ENCODE measurements at regions of chr11 and their contacts with region 1.

Region 1: DNA sequence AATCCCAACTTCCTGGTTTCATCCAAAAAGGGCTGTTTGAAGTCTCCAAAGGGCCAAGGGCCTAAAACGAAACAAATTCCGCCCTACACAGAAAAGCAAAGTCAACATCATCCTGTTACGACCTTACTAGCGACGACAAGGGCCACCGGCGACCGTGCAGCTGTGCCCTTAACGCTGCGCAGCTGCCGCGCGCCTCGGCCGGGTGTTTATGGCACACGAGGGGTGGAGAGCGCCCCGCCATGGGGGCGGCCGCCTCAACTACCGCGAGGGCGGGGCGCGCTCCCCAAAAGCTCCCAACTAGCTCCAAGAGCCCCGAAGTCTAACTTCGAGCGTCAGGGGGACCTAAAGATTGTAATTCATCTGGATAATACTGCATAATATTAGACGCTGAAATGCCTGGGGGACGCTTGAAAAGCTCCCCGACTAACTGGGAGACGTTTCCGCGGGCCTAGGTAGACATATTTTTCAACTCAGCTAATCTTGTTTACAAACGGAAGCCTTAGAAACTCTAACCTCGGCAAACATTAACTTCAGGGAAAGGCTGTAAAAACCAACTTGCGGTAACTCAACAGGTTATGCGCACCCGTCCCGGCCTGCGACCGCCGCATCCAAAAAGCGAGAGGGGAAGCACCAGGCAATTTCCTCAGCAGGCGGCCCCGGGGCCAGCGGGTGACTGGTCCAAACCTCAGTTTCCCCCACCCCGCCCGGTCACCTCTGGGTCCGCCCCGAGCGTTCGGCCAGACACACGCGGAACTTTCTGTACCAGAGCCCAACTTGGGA is 694 bp downstream of the TMEM123 start:
- DNase-seq: peak; percentile 78 to 82 (median 82)
- H3K4me3 ChIP-seq: peak overlapping the region; percentile 83 to 94
- H3K4me3 Mint-ChIP-seq: peak overlapping the region; percentile 89 to 99 (median 98)
- H3K27ac ChIP-seq: peak overlapping the region; percentile 86
- H3K27ac Mint-ChIP-seq: peak overlapping the region; percentile 94 to 98 (median 97)
- H3K4me1 ChIP-seq: peaks cover 70% of the 10 kb centered on the region
- H3K4me1 Mint-ChIP-seq: peaks cover 63 to 93% (median 76%) of the 10 kb centered on the region in 4 donors
- H3K27me3 ChIP-seq: no peaks in the 10 kb centered on the region
- H3K27me3 Mint-ChIP-seq: no peaks in the 10 kb centered on the region

Region 2: DNA sequence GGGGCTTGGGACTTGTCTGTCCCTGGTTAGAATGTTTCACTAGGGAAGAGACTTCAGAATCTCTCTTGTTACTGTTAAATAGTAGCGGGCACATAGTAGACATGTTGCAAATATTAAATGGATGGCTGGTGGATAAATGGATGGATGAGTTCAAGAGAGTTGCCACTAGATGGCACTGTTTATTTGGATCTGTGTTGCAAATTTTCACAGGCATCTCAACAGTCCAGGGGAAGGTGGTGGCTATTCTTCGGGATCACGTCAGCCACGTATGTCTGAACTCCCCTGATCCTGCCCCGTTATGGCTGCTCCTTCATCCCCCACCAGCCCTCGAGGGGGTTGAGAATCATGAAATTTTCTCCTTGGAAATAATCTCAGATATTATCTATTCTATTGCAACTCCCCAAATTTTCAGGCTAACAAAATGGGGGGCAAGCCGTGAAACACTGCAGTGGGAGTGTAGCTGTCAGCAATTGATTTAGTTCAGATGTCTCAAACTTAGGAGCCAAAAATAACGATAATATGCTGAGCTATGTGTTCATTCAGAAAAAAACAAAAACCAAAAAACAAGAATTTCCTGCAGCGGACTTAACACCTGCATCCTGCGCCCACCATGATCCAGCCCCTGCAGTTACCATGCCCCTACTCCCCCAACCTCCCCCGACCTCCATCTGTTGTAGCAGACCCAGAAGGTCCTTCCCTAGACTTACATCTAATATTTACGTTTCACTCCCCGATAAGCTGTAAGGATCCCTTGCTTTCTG is 163.7 kb before region 1 on chr11:
- CTCF ChIA-PET with region 1: interaction called, 9 read pairs
- POLR2A ChIA-PET with region 1: interaction called, 3 read pairs
- intact Hi-C with region 1: loop called (anchors 2 kb)
- DNase-seq: peak; percentile 56 to 74 (median 71)
- H3K4me3 ChIP-seq: no peak overlapping the region
- H3K4me3 Mint-ChIP-seq: peak overlapping the region in 5 of 8 donors; percentile 5 to 32 (median 12)
- H3K27ac ChIP-seq: no peak overlapping the region
- H3K27ac Mint-ChIP-seq: peak overlapping the region in 5 of 7 donors; percentile 19 to 79 (median 63)
- H3K4me1 ChIP-seq: peaks cover 18% of the 10 kb centered on the region
- H3K4me1 Mint-ChIP-seq: peaks cover 17 to 36% (median 20%) of the 10 kb centered on the region in 4 donors
- H3K27me3 ChIP-seq: no peaks in the 10 kb centered on the region
- H3K27me3 Mint-ChIP-seq: peaks cover 0 to 2% of the 10 kb centered on the region in 2 donors

Region 3: DNA sequence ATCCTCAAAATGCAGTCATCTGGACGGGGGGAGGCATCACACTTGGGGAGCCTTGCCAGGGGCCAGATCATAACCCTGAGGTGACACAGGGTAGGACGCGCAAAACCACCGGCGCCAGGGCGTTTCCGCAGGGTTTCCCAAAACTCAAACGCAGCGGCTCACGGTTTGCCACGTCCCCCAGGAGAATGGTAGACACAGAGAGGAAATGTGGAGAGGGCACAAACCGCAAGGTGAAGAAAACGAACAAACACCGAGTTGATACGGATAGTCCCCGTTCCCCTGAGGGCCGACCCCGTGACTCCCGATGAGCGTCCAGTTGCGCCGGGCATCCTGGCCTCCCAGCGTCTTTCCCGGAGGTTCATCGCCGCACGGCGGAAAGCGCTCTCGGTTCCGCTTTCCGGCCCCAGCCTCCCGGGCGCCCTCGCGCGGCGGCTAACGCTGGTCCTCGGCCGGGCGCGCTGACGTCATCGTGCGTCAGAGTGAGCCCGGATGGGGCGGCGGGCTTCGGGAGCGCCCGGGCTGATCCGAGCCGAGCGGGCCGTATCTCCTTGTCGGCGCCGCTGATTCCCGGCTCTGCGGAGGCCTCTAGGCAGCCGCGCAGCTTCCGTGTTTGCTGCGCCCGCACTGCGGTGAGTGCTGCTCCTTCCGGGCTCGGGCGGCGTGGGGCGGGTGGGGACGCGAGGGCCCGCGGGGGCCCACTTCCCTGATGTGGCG is 105.0 kb before region 1 on chr11 and contains the start of gene BIRC2:
- CTCF ChIA-PET with region 1: interaction called, 7 read pairs
- POLR2A ChIA-PET with region 1: interaction called, 7 read pairs
- intact Hi-C with region 1: loop called (anchors 1 kb)
- DNase-seq: peak; percentile 92 to 97 (median 95)
- H3K4me3 ChIP-seq: peak within 1 kb of the TSS; percentile 81 to 98
- H3K4me3 Mint-ChIP-seq: peak within 1 kb of the TSS; percentile 89 to 100 (median 97)
- H3K27ac ChIP-seq: peak within 1 kb of the TSS; percentile 94
- H3K27ac Mint-ChIP-seq: peak within 1 kb of the TSS; percentile 98 to 100 (median 99)
- H3K4me1 ChIP-seq: peaks cover 30% of the 10 kb centered on the region
- H3K4me1 Mint-ChIP-seq: peaks cover 24 to 56% (median 32%) of the 10 kb centered on the region in 4 donors
- H3K27me3 ChIP-seq: no peaks in the 10 kb centered on the region
- H3K27me3 Mint-ChIP-seq: peaks cover 0 to 1% of the 10 kb centered on the region in 2 donors
- total RNA-seq, gene BIRC2: 60.9 to 61.2 TPM

Region 4: GRCh38 chr11:102416976-102417375 is 34.9 kb before region 1 on chr11:
- CTCF ChIA-PET with region 1: interaction called, 9 read pairs
- POLR2A ChIA-PET with region 1: interaction called, 7 read pairs
- intact Hi-C with region 1: loop called (anchors 1 kb)
- DNase-seq: peak in 2 of 5 donors; percentile 12 to 17
- H3K4me3 ChIP-seq: peak overlapping the region in 1 of 2 donors; percentile 5
- H3K4me3 Mint-ChIP-seq: peak overlapping the region; percentile 75 to 88 (median 82)
- H3K27ac ChIP-seq: peak overlapping the region; percentile 4
- H3K27ac Mint-ChIP-seq: peak overlapping the region; percentile 58 to 94 (median 92)
- H3K4me1 ChIP-seq: peaks cover 98% of the 10 kb centered on the region
- H3K4me1 Mint-ChIP-seq: peaks cover 82 to 96% (median 88%) of the 10 kb centered on the region in 4 donors
- H3K27me3 ChIP-seq: no peaks in the 10 kb centered on the region
- H3K27me3 Mint-ChIP-seq: no peaks in the 10 kb centered on the region

Region 5: DNA sequence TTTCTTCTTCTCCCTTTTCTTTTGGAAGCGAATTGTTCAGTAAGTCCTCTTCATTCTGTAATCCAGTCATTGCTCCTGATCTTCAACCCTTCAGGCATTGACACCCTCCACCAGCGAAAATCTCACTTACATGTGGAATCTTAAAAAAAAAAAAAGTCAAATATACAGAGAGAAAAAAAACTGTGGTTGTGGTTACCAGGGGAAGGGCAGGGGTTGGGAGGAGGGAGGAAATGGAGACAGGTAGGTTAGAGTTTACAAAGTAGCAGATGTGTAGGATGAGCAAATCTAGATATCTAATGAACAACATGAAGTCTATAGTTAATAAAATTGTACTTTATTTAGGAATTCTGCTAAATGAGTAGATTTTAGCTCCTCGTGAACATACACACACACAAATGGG is 18.4 kb after region 1 on chr11:
- CTCF ChIA-PET with region 1: interaction called, 8 read pairs
- POLR2A ChIA-PET with region 1: interaction called, 26 read pairs
- intact Hi-C with region 1: loop called (anchors 1 kb)
- DNase-seq: peak; percentile 61 to 74 (median 70)
- H3K4me3 ChIP-seq: no peak overlapping the region
- H3K4me3 Mint-ChIP-seq: peak overlapping the region; percentile 32 to 84 (median 69)
- H3K27ac ChIP-seq: no peak overlapping the region
- H3K27ac Mint-ChIP-seq: peak overlapping the region; percentile 6 to 93 (median 60)
- H3K4me1 ChIP-seq: peaks cover 85% of the 10 kb centered on the region
- H3K4me1 Mint-ChIP-seq: peaks cover 67 to 95% (median 82%) of the 10 kb centered on the region in 4 donors
- H3K27me3 ChIP-seq: no peaks in the 10 kb centered on the region
- H3K27me3 Mint-ChIP-seq: no peaks in the 10 kb centered on the region

Region 6: GRCh38 chr11:102680945-102681344 is 229.1 kb after region 1 on chr11:
- CTCF ChIA-PET with region 1: no interaction called
- POLR2A ChIA-PET with region 1: no interaction called
- intact Hi-C with region 1: no loop called
- DNase-seq: no peak
- H3K4me3 ChIP-seq: no peak overlapping the region
- H3K4me3 Mint-ChIP-seq: no peak overlapping the region
- H3K27ac ChIP-seq: no peak overlapping the region
- H3K27ac Mint-ChIP-seq: no peak overlapping the region
- H3K4me1 ChIP-seq: no peaks in the 10 kb centered on the region
- H3K4me1 Mint-ChIP-seq: no peaks in the 10 kb centered on the region
- H3K27me3 ChIP-seq: no peaks in the 10 kb centered on the region
- H3K27me3 Mint-ChIP-seq: peaks cover 14 to 26% of the 10 kb centered on the region in 2 donors

Measured in CD4-positive, alpha-beta memory T cell (primary cell).